ENCODE measurements at regions of chr12 and their contacts with region 1.

Region 1: GRCh38 chr12:104695453-104696148 is 238.9 kb downstream of the CHST11 start:
- DNase-seq: peak; percentile 51
- H3K4me3 Mint-ChIP-seq: peak overlapping the region; percentile 34
- H3K27ac Mint-ChIP-seq: peak overlapping the region; percentile 89
- H3K4me1 Mint-ChIP-seq: peaks cover 73% of the 10 kb centered on the region
- H3K27me3 Mint-ChIP-seq: no peaks in the 10 kb centered on the region

Region 2: GRCh38 chr12:104462931-104463339 is 232.7 kb before region 1 on chr12:
- intact Hi-C with region 1: loop called (anchors 2 kb)
- DNase-seq: peak; percentile 58
- H3K4me3 Mint-ChIP-seq: peak overlapping the region; percentile 74
- H3K27ac Mint-ChIP-seq: peak overlapping the region; percentile 92
- H3K4me1 Mint-ChIP-seq: peaks cover 68% of the 10 kb centered on the region
- H3K27me3 Mint-ChIP-seq: no peaks in the 10 kb centered on the region

Region 3: DNA sequence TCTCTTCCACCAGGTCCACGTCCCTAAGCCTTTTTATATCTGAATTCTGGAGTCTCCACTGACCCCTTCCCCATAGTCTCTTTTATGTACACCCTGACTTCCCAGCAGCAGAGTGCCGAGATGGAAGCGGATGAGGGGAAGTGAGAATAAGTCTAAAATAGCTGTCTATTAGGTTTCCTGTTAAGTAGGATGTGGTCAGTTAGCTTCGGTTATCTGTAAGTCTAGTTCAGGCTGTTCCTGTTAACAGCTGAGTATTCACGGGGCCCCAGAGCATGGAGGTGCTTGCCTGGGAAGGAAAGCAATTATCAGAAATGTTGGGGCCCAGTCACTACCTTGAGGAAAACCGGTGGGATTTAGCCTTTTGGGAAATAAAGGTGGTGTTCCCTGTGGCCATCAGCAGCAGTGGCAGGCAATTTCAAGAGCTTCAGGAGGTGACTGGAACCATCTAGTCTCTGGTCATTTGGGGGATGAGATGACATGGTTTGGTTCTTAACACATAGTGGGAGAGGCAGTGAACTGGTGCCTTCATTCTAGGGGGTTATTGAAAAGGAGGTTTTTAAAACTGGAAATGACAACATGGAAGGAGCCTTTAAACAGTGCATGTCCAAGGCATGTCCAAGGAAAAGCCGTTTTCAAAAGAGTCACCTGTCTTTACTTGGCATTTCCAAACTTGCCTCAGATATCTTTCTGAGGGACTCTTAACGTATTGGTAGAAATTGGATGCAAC is 217.0 kb before region 1 on chr12:
- intact Hi-C with region 1: loop called (anchors 5 kb)
- DNase-seq: no peak
- H3K4me3 Mint-ChIP-seq: peak overlapping the region; percentile 83
- H3K27ac Mint-ChIP-seq: peak overlapping the region; percentile 96
- H3K4me1 Mint-ChIP-seq: peaks cover 80% of the 10 kb centered on the region
- H3K27me3 Mint-ChIP-seq: no peaks in the 10 kb centered on the region

Region 4: DNA sequence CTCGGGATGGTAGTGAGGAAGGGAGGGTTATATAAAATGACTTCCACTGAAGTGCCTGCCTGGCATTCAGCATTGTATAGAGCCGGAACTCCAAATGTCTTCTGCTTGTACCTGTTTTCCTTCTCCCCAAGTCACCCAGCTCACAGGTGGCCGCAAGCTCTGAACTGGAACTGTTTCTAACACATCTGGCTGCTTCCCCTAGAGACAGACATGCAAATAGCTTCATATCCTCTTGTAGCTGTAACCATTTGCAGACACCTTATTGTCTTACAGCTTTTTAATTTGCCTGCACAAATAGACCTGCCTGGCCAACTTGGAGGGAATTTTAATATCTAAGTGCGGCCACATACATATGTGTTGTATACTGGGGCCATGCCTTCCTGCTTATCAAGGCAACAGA is 112.9 kb before region 1 on chr12:
- intact Hi-C with region 1: loop called (anchors 5 kb)
- DNase-seq: no peak
- H3K4me3 Mint-ChIP-seq: no peak overlapping the region
- H3K27ac Mint-ChIP-seq: no peak overlapping the region
- H3K4me1 Mint-ChIP-seq: peaks cover 67% of the 10 kb centered on the region
- H3K27me3 Mint-ChIP-seq: no peaks in the 10 kb centered on the region

Region 5: GRCh38 chr12:104671407-104672098 is 24.0 kb before region 1 on chr12:
- intact Hi-C with region 1: loop called (anchors 1 kb)
- DNase-seq: peak; percentile 54
- H3K4me3 Mint-ChIP-seq: peak overlapping the region; percentile 45
- H3K27ac Mint-ChIP-seq: peak overlapping the region; percentile 89
- H3K4me1 Mint-ChIP-seq: peaks cover 55% of the 10 kb centered on the region
- H3K27me3 Mint-ChIP-seq: no peaks in the 10 kb centered on the region

Region 6: DNA sequence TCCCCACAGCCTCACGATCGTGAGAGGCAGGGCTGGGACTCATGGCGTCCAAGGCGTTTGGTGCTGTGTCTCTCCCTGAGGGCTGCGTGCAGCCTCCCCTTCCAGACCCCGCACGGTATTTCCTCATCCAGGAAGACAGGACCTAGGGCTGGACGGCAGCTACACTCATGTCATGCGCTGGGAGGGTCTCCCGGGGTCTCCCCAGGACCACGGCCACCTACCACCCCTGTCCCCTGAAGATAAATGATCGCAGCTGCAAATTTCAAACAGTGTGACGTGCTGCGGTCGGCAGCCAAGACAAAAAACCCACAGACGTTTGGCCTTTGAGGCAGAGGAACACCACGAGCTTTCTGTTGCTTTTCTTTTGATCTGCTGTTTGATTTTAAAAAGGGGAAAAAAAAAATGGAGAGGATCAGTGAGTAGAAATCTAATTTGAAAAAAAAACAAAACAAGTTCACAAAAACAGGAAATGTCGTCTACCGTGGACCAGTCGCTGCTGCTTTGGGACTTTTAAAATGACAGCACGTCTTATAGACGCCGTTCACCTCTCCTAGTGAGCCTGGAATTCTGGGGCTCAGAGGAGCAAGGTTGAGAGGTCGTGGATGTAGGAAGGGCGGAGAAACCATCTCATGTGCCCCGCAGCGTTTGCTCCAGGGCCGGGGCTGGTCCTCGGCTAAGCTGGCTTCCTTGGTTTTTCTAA is 24.9 kb after region 1 on chr12:
- intact Hi-C with region 1: loop called (anchors 2 kb)
- DNase-seq: peak; percentile 67
- H3K4me3 Mint-ChIP-seq: peak overlapping the region; percentile 76
- H3K27ac Mint-ChIP-seq: peak overlapping the region; percentile 94
- H3K4me1 Mint-ChIP-seq: peaks cover 47% of the 10 kb centered on the region
- H3K27me3 Mint-ChIP-seq: no peaks in the 10 kb centered on the region

Measured in activated T-helper 2 cell treated with anti-CD3 and anti-CD28 coated beads, Interferon-gamma antibody, Interleukin-2, Interleukin-4, amounts not matched to agents 10 μg/mL and 5 μg/mL and 100 μg/mL, durations not matched to agents 14 hours and 24 hours and 36 hours (primary cell).